Psoas muscle (tissue), 8 donors: ENCODE measurements at regions of chr2 and their contacts with region 1.

Region 1: GRCh38 chr2:69816923-69817542 is 12.4 kb upstream of the GMCL1 start:
- DNase-seq: peak in 1 of 2 donors; percentile 44
- ATAC-seq: peak in 3 of 4 donors; percentile 74 to 90 (median 81)
- H3K4me3 ChIP-seq: no peak overlapping the region
- H3K27ac ChIP-seq: no peak overlapping the region
- H3K4me1 ChIP-seq: no peaks in the 10 kb centered on the region
- H3K27me3 ChIP-seq: no peaks in the 10 kb centered on the region
- CTCF ChIP-seq: peak; percentile 96

Region 2: GRCh38 chr2:69559442-69560146 is 257.4 kb before region 1 on chr2:
- intact Hi-C with region 1: loop called (anchors 10 kb)
- DNase-seq: no peak
- ATAC-seq: peak; percentile 90 to 95 (median 93)
- H3K4me3 ChIP-seq: peak overlapping the region; percentile 4
- H3K27ac ChIP-seq: peak overlapping the region; percentile 19
- H3K4me1 ChIP-seq: peaks cover 43% of the 10 kb centered on the region
- H3K27me3 ChIP-seq: no peaks in the 10 kb centered on the region
- CTCF ChIP-seq: peak; percentile 76

Region 3: DNA sequence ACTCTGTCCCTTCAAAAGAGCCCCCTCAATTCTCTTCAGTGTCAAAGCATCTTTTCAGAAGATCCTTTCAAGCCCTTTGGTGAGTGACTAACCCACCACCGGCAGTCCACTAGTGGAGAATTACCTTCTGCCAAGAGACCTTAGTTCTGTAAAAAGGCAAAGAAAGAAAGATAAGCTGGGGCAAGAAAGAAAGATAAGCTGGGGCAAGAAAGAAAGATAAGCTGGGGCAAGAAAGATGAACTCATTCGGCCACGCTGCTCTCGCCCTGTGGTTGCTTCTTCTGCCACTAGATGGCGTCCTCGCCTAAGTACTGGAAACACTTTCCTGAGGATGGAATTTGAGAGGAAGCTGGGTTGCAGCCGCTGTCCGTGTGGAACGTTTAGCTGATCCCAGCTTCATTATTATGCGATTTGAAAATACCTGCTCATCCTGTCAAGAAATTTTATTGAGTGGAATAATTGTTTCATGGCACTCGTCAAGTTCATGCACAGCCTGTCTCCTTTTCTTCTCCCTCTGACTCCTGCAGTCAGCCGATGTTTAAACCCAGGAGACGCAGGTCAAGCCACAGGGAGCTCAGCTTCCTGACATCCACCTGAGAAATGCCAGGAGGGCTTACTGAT is 92.4 kb before region 1 on chr2:
- intact Hi-C with region 1: loop called (anchors 1 to 2 kb)
- DNase-seq: peak; percentile 82 to 91
- ATAC-seq: peak; percentile 90 to 97 (median 92)
- H3K4me3 ChIP-seq: peak overlapping the region; percentile 45
- H3K27ac ChIP-seq: no peak overlapping the region
- H3K4me1 ChIP-seq: no peaks in the 10 kb centered on the region
- H3K27me3 ChIP-seq: no peaks in the 10 kb centered on the region
- CTCF ChIP-seq: peak; percentile 97